CD8-positive, alpha-beta T cell (primary cell): ENCODE measurements at regions of chr6 and their contacts with region 1.

Region 1: DNA sequence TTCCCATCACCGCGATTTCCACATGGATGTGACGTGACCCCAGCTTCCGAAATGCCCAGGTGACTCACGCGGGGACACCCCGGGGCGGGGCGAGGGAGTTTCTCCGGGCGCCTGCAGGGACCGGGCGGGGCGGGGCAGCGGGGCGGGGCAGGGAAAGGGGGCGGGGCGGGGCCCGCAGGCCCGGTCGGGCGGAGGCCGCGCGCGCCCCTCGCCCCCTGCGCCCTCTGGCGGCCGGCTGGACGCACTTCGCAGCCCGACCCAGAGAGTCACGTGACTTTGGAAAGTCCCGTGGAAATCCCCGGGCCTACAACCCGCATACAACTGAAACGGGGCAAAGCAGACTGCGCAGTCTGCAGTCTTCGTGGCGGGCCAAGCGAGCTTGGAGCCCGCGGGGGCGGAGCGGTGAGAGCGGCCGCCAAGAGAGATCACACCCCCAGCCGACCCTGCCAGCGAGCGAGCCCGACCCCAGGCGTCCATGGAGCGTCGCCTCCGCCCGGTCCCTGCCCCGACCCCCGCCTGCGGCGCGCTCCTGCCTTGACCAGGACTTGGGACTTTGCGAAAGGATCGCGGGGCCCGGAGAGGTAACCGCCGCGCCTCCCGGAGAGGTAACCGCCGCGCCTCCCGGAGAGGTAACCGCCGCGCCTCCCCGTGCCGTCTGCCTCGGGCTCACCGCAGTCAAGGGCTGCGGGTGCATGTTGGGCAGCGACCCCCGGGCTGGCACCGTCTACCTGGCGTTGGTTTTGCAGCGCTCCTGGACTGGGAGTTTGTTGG is at the start of gene TNFAIP3:
- DNase-seq: peak; percentile 91 to 98 (median 95)
- ATAC-seq: peak; percentile 72
- H3K4me3 ChIP-seq: peak within 1 kb of the TSS; percentile 75 to 79
- H3K4me3 Mint-ChIP-seq: peak within 1 kb of the TSS; percentile 98
- H3K27ac ChIP-seq: peak within 1 kb of the TSS; percentile 95 to 96
- H3K27ac Mint-ChIP-seq: peak within 1 kb of the TSS; percentile 99
- H3K4me1 ChIP-seq: peaks cover 43% of the 10 kb centered on the region
- H3K4me1 Mint-ChIP-seq: peaks cover 47% of the 10 kb centered on the region
- H3K27me3 ChIP-seq: no peaks in the 10 kb centered on the region
- H3K27me3 Mint-ChIP-seq: no peaks in the 10 kb centered on the region
- CTCF ChIP-seq: peak; percentile 69
- total RNA-seq, gene TNFAIP3: 3,739 to 3,807 TPM

Region 2: GRCh38 chr6:137218917-137219663 is 648.0 kb before region 1 on chr6 and contains the start of gene IFNGR1:
- CTCF ChIA-PET with region 1: no interaction called
- POLR2A ChIA-PET with region 1: interaction called, 6 read pairs
- intact Hi-C with region 1: loop called in 1 of 2 experiments (anchors 1 kb)
- DNase-seq: peak; percentile 89 to 97 (median 96)
- ATAC-seq: peak; percentile 87
- H3K4me3 ChIP-seq: peak within 1 kb of the TSS; percentile 62 to 72
- H3K4me3 Mint-ChIP-seq: peak within 1 kb of the TSS; percentile 94
- H3K27ac ChIP-seq: peak within 1 kb of the TSS; percentile 89 to 94
- H3K27ac Mint-ChIP-seq: peak within 1 kb of the TSS; percentile 97
- H3K4me1 ChIP-seq: peaks cover 30% of the 10 kb centered on the region
- H3K4me1 Mint-ChIP-seq: peaks cover 69% of the 10 kb centered on the region
- H3K27me3 ChIP-seq: no peaks in the 10 kb centered on the region
- H3K27me3 Mint-ChIP-seq: no peaks in the 10 kb centered on the region
- CTCF ChIP-seq: no peak
- total RNA-seq, gene IFNGR1: 106 to 117 TPM

Region 3: GRCh38 chr6:137799950-137800568 is 67.0 kb before region 1 on chr6:
- CTCF ChIA-PET with region 1: interaction called, 54 read pairs
- POLR2A ChIA-PET with region 1: interaction called, 40 read pairs
- intact Hi-C with region 1: loop called (anchors 1 kb)
- DNase-seq: peak; percentile 40 to 93 (median 72)
- ATAC-seq: peak; percentile 83
- H3K4me3 ChIP-seq: no peak overlapping the region
- H3K4me3 Mint-ChIP-seq: no peak overlapping the region
- H3K27ac ChIP-seq: peak overlapping the region in 1 of 2 experiments; percentile 4
- H3K27ac Mint-ChIP-seq: peak overlapping the region; percentile 56
- H3K4me1 ChIP-seq: peaks cover 47% of the 10 kb centered on the region
- H3K4me1 Mint-ChIP-seq: peaks cover 53% of the 10 kb centered on the region
- H3K27me3 ChIP-seq: no peaks in the 10 kb centered on the region
- H3K27me3 Mint-ChIP-seq: no peaks in the 10 kb centered on the region
- CTCF ChIP-seq: peak; percentile 68

Region 4: GRCh38 chr6:137853569-137854213 is 13.4 kb before region 1 on chr6:
- CTCF ChIA-PET with region 1: interaction called, 3 read pairs
- POLR2A ChIA-PET with region 1: interaction called, 4 read pairs
- intact Hi-C with region 1: loop called in 1 of 2 experiments (anchors 2 kb)
- DNase-seq: no peak
- ATAC-seq: no peak
- H3K4me3 ChIP-seq: no peak overlapping the region
- H3K4me3 Mint-ChIP-seq: no peak overlapping the region
- H3K27ac ChIP-seq: no peak overlapping the region
- H3K27ac Mint-ChIP-seq: no peak overlapping the region
- H3K4me1 ChIP-seq: no peaks in the 10 kb centered on the region
- H3K4me1 Mint-ChIP-seq: no peaks in the 10 kb centered on the region
- H3K27me3 ChIP-seq: no peaks in the 10 kb centered on the region
- H3K27me3 Mint-ChIP-seq: no peaks in the 10 kb centered on the region
- CTCF ChIP-seq: no peak

Region 5: DNA sequence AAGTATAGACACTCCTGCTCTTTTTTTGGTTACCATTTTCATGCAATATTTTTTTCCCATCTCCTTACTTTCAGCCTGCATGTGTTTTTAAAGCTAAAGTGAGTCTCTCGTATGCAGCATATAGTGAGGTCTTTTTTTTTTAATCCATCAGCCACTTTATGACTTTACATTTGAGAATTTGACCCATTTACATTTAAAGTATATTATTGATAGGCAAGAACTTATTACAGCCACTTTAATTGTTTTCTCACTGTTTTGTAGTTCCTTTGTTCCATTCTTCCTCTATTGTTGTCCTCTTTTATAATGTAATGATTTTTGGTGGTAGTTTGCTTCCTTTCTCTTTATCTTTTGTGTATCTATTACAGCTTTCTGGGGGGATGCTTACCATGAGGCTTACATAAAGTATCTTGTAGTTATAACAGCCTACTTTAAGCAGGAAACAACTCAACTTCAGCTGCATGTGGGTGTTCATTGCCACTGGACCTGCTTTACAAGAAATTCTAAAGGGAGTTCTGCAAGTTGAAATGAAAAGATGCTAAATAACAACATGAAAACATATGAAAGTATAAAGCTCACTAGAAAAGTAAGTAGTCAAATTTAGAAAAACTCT is 71.8 kb after region 1 on chr6:
- CTCF ChIA-PET with region 1: interaction called, 72 read pairs
- POLR2A ChIA-PET with region 1: interaction called, 18 read pairs
- intact Hi-C with region 1: loop called in 1 of 2 experiments (anchors 5 kb)
- DNase-seq: no peak
- ATAC-seq: no peak
- H3K4me3 ChIP-seq: no peak overlapping the region
- H3K4me3 Mint-ChIP-seq: no peak overlapping the region
- H3K27ac ChIP-seq: no peak overlapping the region
- H3K27ac Mint-ChIP-seq: no peak overlapping the region
- H3K4me1 ChIP-seq: peaks cover 7% of the 10 kb centered on the region
- H3K4me1 Mint-ChIP-seq: peaks cover 9% of the 10 kb centered on the region
- H3K27me3 ChIP-seq: no peaks in the 10 kb centered on the region
- H3K27me3 Mint-ChIP-seq: no peaks in the 10 kb centered on the region
- CTCF ChIP-seq: no peak

Region 6: GRCh38 chr6:138109042-138109997 is 242.2 kb after region 1 on chr6:
- CTCF ChIA-PET with region 1: no interaction called
- POLR2A ChIA-PET with region 1: no interaction called
- intact Hi-C with region 1: loop called (anchors 1 to 5 kb)
- DNase-seq: peak; percentile 61 to 85 (median 81)
- ATAC-seq: peak; percentile 71
- H3K4me3 ChIP-seq: no peak overlapping the region
- H3K4me3 Mint-ChIP-seq: no peak overlapping the region
- H3K27ac ChIP-seq: no peak overlapping the region
- H3K27ac Mint-ChIP-seq: no peak overlapping the region
- H3K4me1 ChIP-seq: peaks cover 9% of the 10 kb centered on the region
- H3K4me1 Mint-ChIP-seq: peaks cover 18% of the 10 kb centered on the region
- H3K27me3 ChIP-seq: peaks cover 5 to 7% of the 10 kb centered on the region in 2 experiments
- H3K27me3 Mint-ChIP-seq: peaks cover 25% of the 10 kb centered on the region
- CTCF ChIP-seq: peak; percentile 92